ENCODE measurements at regions of chr5 and their contacts with region 1.

Region 1: GRCh38 chr5:178075840-178076548 is 37.3 kb upstream of the N4BP3 start:
- DNase-seq: peak; percentile 49 to 83 (median 69)
- H3K4me3 ChIP-seq: no peak overlapping the region
- H3K27ac ChIP-seq: no peak overlapping the region
- H3K4me1 ChIP-seq: no peaks in the 10 kb centered on the region
- H3K27me3 ChIP-seq: peaks cover 12% of the 10 kb centered on the region
- CTCF ChIP-seq: peak; percentile 72 to 89 (median 82)
- POLR2A ChIP-seq: no peak

Region 2: GRCh38 chr5:178146020-178146820 is 70.2 kb after region 1 on chr5:
- intact Hi-C with region 1: loop called in 1 of 2 experiments (anchors 5 kb)
- DNase-seq: peak in 6 of 7 donors; percentile 58 to 85 (median 66)
- H3K4me3 ChIP-seq: no peak overlapping the region
- H3K27ac ChIP-seq: no peak overlapping the region
- H3K4me1 ChIP-seq: peaks cover 3 to 6% of the 10 kb centered on the region in 2 donors
- H3K27me3 ChIP-seq: no peaks in the 10 kb centered on the region
- CTCF ChIP-seq: peak; percentile 38 to 65 (median 56)
- POLR2A ChIP-seq: no peak

Region 3: DNA sequence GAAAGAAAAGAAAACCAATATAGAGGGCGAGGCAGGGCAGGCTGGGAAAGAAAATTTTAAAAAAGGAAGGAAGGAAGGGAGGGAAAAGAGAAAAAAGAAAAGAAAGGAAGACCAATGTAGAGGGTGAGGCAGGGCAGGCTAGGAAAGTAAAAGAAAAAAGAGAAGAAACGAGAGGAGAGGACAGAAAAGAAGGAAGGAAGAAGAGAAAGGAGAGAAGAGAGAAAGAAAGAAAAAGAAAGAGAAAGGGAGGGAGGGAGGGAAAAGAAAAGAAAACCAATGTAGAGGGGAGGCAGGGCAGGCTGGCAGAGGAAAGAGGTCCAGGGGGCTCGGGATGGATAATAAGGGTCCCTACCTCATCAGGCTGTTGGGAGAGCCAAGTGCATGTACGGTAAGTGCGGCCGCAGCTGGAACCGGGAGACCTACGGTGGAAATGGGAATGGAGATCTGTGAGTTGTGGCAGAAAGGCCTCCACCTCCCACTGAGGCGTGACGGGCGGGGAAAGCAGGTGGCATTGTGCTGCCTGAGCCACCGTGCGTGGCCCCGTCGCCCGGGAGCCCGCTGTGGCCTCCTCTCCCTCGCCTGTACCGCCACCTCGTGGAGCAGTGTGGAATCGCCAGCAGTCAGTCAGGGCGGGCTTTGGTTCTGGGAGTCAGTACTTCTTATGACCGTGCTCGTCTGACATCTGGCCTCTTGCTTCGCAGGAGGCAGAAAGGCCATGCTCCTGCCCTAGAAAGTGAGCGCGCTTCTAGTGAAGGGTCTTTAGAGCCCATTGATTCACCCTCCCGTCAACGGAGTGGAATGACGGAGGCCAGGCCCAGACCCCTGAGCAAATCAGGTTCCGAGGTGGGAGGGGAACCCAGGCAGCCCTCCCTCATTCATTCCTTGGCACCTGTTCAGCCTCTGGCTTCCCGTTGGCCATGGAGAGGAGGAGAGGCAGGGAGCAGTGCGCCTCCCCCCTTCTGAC is 88.1 kb after region 1 on chr5:
- intact Hi-C with region 1: loop called (anchors 2 kb)
- DNase-seq: peak; percentile 76 to 92 (median 84)
- H3K4me3 ChIP-seq: no peak overlapping the region
- H3K27ac ChIP-seq: no peak overlapping the region
- H3K4me1 ChIP-seq: peaks cover 0 to 3% of the 10 kb centered on the region in 2 donors
- H3K27me3 ChIP-seq: peaks cover 23% of the 10 kb centered on the region
- CTCF ChIP-seq: peak; percentile 89 to 100 (median 96)
- POLR2A ChIP-seq: no peak

Region 4: GRCh38 chr5:178524093-178524882 is 448.3 kb after region 1 on chr5:
- intact Hi-C with region 1: no loop called
- DNase-seq: no peak
- H3K4me3 ChIP-seq: no peak overlapping the region
- H3K27ac ChIP-seq: no peak overlapping the region
- H3K4me1 ChIP-seq: no peaks in the 10 kb centered on the region
- H3K27me3 ChIP-seq: no peaks in the 10 kb centered on the region
- CTCF ChIP-seq: no peak
- POLR2A ChIP-seq: no peak

Measured in adrenal gland (tissue), 19 donors.